IMR-90 (cell line): ENCODE measurements at regions of chr22 and their contacts with region 1.

Region 1: GRCh38 chr22:28442264-28442710 is 237.4 kb downstream of the TTC28 start:
- DNase-seq: peak; percentile 69
- ATAC-seq: peak; percentile 87
- H3K4me3 ChIP-seq: peak overlapping the region; percentile 45
- H3K27ac ChIP-seq: peak overlapping the region; percentile 75
- H3K4me1 ChIP-seq: peaks cover 5% of the 10 kb centered on the region; the same call in 1 of the 2 replicates
- H3K27me3 ChIP-seq: no peaks in the 10 kb centered on the region
- CTCF ChIP-seq: peak; percentile 84
- POLR2A ChIP-seq: 0 out of 2 replicates have a peak, but pooled peaks have one; percentile 38
- RAD21 ChIP-seq: peak; percentile 89

Region 2: GRCh38 chr22:28019881-28020871 is 422.1 kb before region 1 on chr22:
- CTCF ChIA-PET with region 1: interaction called, 3 read pairs
- POLR2A ChIA-PET with region 1: no interaction called
- dilution Hi-C with region 1: no loop called
- in situ Hi-C with region 1: no loop called
- intact Hi-C with region 1: loop called (anchors 1 kb)
- DNase-seq: peak; percentile 60
- ATAC-seq: peak; percentile 95
- H3K4me3 ChIP-seq: no peak overlapping the region
- H3K27ac ChIP-seq: peak overlapping the region; percentile 21; the same call in 1 of the 2 replicates
- H3K4me1 ChIP-seq: peaks cover 13% of the 10 kb centered on the region
- H3K27me3 ChIP-seq: no peaks in the 10 kb centered on the region
- CTCF ChIP-seq: peak; percentile 89
- POLR2A ChIP-seq: no peak
- RAD21 ChIP-seq: peak; percentile 89

Region 3: GRCh38 chr22:28142361-28142961 is 299.8 kb before region 1 on chr22:
- CTCF ChIA-PET with region 1: interaction called, 4 read pairs
- POLR2A ChIA-PET with region 1: interaction called, 3 read pairs
- dilution Hi-C with region 1: no loop called
- in situ Hi-C with region 1: no loop called
- intact Hi-C with region 1: loop called (anchors 5 kb)
- DNase-seq: peak; percentile 85
- ATAC-seq: peak; percentile 38
- H3K4me3 ChIP-seq: no peak overlapping the region
- H3K27ac ChIP-seq: peak overlapping the region; percentile 71; the same call in 1 of the 2 replicates
- H3K4me1 ChIP-seq: peaks cover 29% of the 10 kb centered on the region
- H3K27me3 ChIP-seq: no peaks in the 10 kb centered on the region
- CTCF ChIP-seq: no peak
- POLR2A ChIP-seq: no peak
- RAD21 ChIP-seq: no peak

Region 4: GRCh38 chr22:28395920-28396753 is 46.1 kb before region 1 on chr22:
- CTCF ChIA-PET with region 1: no interaction called
- POLR2A ChIA-PET with region 1: interaction called, 19 read pairs
- dilution Hi-C with region 1: no loop called
- in situ Hi-C with region 1: no loop called
- intact Hi-C with region 1: loop called (anchors 5 kb)
- DNase-seq: peak; percentile 48
- ATAC-seq: peak; percentile 68
- H3K4me3 ChIP-seq: no peak overlapping the region
- H3K27ac ChIP-seq: peak overlapping the region; percentile 89
- H3K4me1 ChIP-seq: peaks cover 23% of the 10 kb centered on the region
- H3K27me3 ChIP-seq: no peaks in the 10 kb centered on the region
- CTCF ChIP-seq: no peak
- POLR2A ChIP-seq: no peak
- RAD21 ChIP-seq: no peak

Region 5: DNA sequence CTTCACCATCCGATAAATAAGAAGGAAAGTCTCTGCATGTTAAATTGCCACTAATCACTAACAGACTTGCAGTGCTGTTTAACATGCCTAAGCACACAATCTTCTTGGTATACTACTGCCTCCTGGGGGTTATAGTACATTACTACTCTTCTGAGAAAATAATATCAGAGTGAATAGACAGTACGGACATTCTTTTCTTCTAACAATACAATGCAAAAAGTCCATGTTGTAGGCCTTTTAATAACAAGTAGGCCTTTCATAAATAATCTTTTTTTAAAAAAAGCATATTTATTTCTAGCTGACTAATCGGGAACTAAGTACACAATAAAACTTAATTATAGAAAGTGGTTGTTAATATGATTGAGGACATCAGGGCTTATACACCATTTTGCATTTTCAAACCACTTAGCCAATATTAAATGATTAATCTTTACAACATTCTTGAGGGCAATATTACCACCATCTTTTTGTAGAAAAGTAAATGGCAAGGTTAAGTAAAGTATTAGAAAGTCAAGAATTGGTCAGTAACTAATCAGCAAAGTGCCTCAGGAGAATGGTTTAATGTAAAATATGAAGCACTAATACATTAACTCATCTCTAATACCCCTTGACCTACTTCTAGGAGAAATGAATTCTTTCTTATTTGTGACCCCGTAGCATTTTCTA is 152.6 kb after region 1 on chr22:
- CTCF ChIA-PET with region 1: interaction called, 3 read pairs
- POLR2A ChIA-PET with region 1: no interaction called
- dilution Hi-C with region 1: no loop called
- in situ Hi-C with region 1: no loop called
- intact Hi-C with region 1: loop called (anchors 1 kb)
- DNase-seq: peak; percentile 77
- ATAC-seq: peak; percentile 95
- H3K4me3 ChIP-seq: no peak overlapping the region
- H3K27ac ChIP-seq: no peak overlapping the region
- H3K4me1 ChIP-seq: peaks cover 6% of the 10 kb centered on the region; the same call in 1 of the 2 replicates
- H3K27me3 ChIP-seq: no peaks in the 10 kb centered on the region
- CTCF ChIP-seq: peak; percentile 82
- POLR2A ChIP-seq: no peak
- RAD21 ChIP-seq: peak; percentile 93

Region 6: DNA sequence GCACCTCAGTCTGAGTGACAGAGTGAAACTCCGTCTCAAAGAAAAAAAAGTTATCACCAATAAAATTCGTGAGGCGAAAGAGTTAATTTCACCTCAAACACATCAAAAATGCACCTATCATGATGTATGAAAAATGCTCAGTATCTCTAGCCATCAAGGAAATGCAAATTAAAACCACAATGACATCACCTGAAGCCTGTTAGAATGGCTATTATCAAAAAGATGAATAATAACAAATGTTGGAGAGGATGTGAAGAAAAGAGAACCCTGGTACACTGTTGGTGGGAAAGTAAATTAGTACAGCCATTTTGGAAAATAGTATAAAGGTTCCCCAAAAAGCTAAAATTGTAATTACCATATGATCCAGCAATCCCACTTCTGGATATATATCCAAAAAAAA is 275.8 kb after region 1 on chr22:
- CTCF ChIA-PET with region 1: no interaction called
- POLR2A ChIA-PET with region 1: no interaction called
- dilution Hi-C with region 1: no loop called
- in situ Hi-C with region 1: no loop called
- intact Hi-C with region 1: no loop called
- DNase-seq: no peak
- ATAC-seq: no peak
- H3K4me3 ChIP-seq: no peak overlapping the region
- H3K27ac ChIP-seq: no peak overlapping the region
- H3K4me1 ChIP-seq: peaks cover 2% of the 10 kb centered on the region; the same call in 1 of the 2 replicates
- H3K27me3 ChIP-seq: no peaks in the 10 kb centered on the region
- CTCF ChIP-seq: no peak
- POLR2A ChIP-seq: no peak
- RAD21 ChIP-seq: no peak